ENCODE measurements at regions of chr17 and their contacts with region 1.

Region 1: GRCh38 chr17:57671667-57672632 is 73.1 kb downstream of the CCDC182 start:
- DNase-seq: peak; percentile 79
- H3K4me3 Mint-ChIP-seq: no peak overlapping the region
- H3K27ac Mint-ChIP-seq: no peak overlapping the region
- H3K4me1 Mint-ChIP-seq: peaks cover 19% of the 10 kb centered on the region
- H3K27me3 Mint-ChIP-seq: no peaks in the 10 kb centered on the region
- CTCF ChIP-seq: peak; percentile 90

Region 2: DNA sequence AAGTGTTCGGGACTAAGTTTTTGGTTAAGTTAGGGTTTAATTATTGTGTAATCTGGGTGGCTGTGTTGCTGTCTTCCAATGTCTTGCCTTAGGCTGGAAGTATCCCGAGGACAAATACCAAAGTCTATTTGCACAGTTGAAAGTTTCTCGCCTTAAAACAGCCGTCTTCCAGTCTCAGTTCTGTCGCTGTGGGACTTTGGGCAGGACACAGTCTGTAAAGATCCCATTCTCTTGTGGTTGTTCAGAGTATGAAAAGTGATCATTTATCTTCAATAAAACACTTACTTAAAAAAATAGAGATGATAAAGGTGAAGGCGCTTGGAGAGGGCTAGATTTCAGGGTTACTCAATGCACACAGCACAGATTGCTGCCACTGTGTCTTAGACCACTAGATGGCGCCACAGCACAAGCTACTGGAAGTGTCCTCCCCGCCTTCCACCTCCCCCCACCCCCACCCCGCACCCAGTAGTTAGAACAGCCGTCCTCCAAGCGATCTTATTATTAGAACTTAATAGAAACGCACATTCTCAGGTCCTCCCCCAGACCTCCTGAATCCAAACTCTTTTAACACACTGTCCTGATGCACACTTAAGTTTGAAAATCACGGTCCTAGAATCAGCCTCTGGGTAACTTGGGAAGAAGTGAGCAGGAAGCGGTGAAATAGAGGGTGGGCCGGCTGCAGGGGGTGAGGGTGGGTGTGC is 541.0 kb before region 1 on chr17:
- CTCF ChIA-PET with region 1: interaction called, 11 read pairs
- POLR2A ChIA-PET with region 1: no interaction called
- intact Hi-C with region 1: loop called (anchors 1 kb)
- DNase-seq: peak; percentile 89
- H3K4me3 Mint-ChIP-seq: no peak overlapping the region
- H3K27ac Mint-ChIP-seq: no peak overlapping the region
- H3K4me1 Mint-ChIP-seq: peaks cover 5% of the 10 kb centered on the region
- H3K27me3 Mint-ChIP-seq: no peaks in the 10 kb centered on the region
- CTCF ChIP-seq: peak; percentile 85

Region 3: GRCh38 chr17:57440522-57441485 is 231.1 kb before region 1 on chr17:
- CTCF ChIA-PET with region 1: interaction called, 7 read pairs
- POLR2A ChIA-PET with region 1: no interaction called
- intact Hi-C with region 1: loop called (anchors 5 kb)
- DNase-seq: peak; percentile 90
- H3K4me3 Mint-ChIP-seq: peak overlapping the region; percentile 58
- H3K27ac Mint-ChIP-seq: peak overlapping the region; percentile 88
- H3K4me1 Mint-ChIP-seq: peaks cover 51% of the 10 kb centered on the region
- H3K27me3 Mint-ChIP-seq: no peaks in the 10 kb centered on the region
- CTCF ChIP-seq: peak; percentile 59

Region 4: DNA sequence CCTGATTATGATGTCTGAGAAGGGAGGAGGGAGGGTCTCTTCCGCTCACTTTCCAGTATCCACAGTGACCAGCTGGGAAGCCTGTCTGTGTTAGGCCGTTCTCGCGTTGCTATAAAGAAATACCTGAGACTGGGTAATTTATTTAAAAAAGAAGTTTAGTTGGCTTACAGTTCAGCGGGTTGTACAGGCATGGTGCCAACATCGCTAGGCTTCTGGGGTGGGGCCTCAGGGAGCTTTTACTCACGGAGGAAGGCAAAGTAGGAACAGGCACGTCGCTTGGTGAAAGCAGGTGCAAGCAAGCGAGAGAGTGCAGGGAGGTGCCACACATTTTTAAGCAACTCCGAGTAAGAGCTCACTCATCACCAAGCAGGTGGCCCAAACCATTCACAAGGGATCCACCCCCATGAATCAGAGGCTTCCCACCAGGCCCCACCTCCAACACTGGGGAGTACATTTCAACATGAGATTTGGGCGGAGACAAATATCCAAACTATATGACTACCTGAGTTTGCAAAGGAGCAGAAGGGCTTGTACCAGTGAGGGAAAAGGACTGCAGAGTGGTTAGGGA is 64.3 kb before region 1 on chr17:
- CTCF ChIA-PET with region 1: no interaction called
- POLR2A ChIA-PET with region 1: no interaction called
- intact Hi-C with region 1: no loop called
- DNase-seq: peak; percentile 90
- H3K4me3 Mint-ChIP-seq: no peak overlapping the region
- H3K27ac Mint-ChIP-seq: no peak overlapping the region
- H3K4me1 Mint-ChIP-seq: peaks cover 18% of the 10 kb centered on the region
- H3K27me3 Mint-ChIP-seq: no peaks in the 10 kb centered on the region
- CTCF ChIP-seq: no peak

Region 5: GRCh38 chr17:57645950-57646665 is 25.8 kb before region 1 on chr17:
- CTCF ChIA-PET with region 1: interaction called, 12 read pairs
- POLR2A ChIA-PET with region 1: no interaction called
- intact Hi-C with region 1: no loop called
- DNase-seq: no peak
- H3K4me3 Mint-ChIP-seq: no peak overlapping the region
- H3K27ac Mint-ChIP-seq: no peak overlapping the region
- H3K4me1 Mint-ChIP-seq: no peaks in the 10 kb centered on the region
- H3K27me3 Mint-ChIP-seq: no peaks in the 10 kb centered on the region
- CTCF ChIP-seq: no peak

Region 6: GRCh38 chr17:57685505-57686132 is 13.7 kb after region 1 on chr17:
- CTCF ChIA-PET with region 1: interaction called, 14 read pairs
- POLR2A ChIA-PET with region 1: no interaction called
- intact Hi-C with region 1: no loop called
- DNase-seq: no peak
- H3K4me3 Mint-ChIP-seq: no peak overlapping the region
- H3K27ac Mint-ChIP-seq: no peak overlapping the region
- H3K4me1 Mint-ChIP-seq: no peaks in the 10 kb centered on the region
- H3K27me3 Mint-ChIP-seq: peaks cover 11% of the 10 kb centered on the region
- CTCF ChIP-seq: no peak

Region 7: GRCh38 chr17:57747221-57748017 is 75.5 kb after region 1 on chr17:
- CTCF ChIA-PET with region 1: interaction called, 7 read pairs
- POLR2A ChIA-PET with region 1: no interaction called
- intact Hi-C with region 1: loop called (anchors 2 kb)
- DNase-seq: peak; percentile 68
- H3K4me3 Mint-ChIP-seq: no peak overlapping the region
- H3K27ac Mint-ChIP-seq: no peak overlapping the region
- H3K4me1 Mint-ChIP-seq: no peaks in the 10 kb centered on the region
- H3K27me3 Mint-ChIP-seq: peaks cover 55% of the 10 kb centered on the region
- CTCF ChIP-seq: peak; percentile 77

Region 8: GRCh38 chr17:57772774-57773173 is 100.8 kb after region 1 on chr17:
- CTCF ChIA-PET with region 1: no interaction called
- POLR2A ChIA-PET with region 1: no interaction called
- intact Hi-C with region 1: no loop called
- DNase-seq: no peak
- H3K4me3 Mint-ChIP-seq: no peak overlapping the region
- H3K27ac Mint-ChIP-seq: no peak overlapping the region
- H3K4me1 Mint-ChIP-seq: no peaks in the 10 kb centered on the region
- H3K27me3 Mint-ChIP-seq: peaks cover 92% of the 10 kb centered on the region
- CTCF ChIP-seq: no peak

Measured in MCF 10A (cell line).